Mucosa of descending colon (tissue), 3 donors: ENCODE measurements at regions of chr3 and their contacts with region 1.

Region 1: GRCh38 chr3:9067352-9067975 is 104.2 kb upstream of the RAD18 start:
- DNase-seq: peak in 1 of 3 donors; percentile 70
- ATAC-seq: peak; percentile 75
- H3K4me3 ChIP-seq: no peak overlapping the region
- H3K4me1 ChIP-seq: no peaks in the 10 kb centered on the region
- CTCF ChIP-seq: peak; percentile 71

Region 2: GRCh38 chr3:8970971-8971589 is 96.4 kb before region 1 on chr3:
- intact Hi-C with region 1: loop called (anchors 1 to 5 kb)
- DNase-seq: peak in 2 of 3 donors; percentile 62 to 81
- ATAC-seq: peak; percentile 84
- H3K4me3 ChIP-seq: no peak overlapping the region
- H3K4me1 ChIP-seq: peaks cover 10% of the 10 kb centered on the region
- CTCF ChIP-seq: peak; percentile 91

Region 3: DNA sequence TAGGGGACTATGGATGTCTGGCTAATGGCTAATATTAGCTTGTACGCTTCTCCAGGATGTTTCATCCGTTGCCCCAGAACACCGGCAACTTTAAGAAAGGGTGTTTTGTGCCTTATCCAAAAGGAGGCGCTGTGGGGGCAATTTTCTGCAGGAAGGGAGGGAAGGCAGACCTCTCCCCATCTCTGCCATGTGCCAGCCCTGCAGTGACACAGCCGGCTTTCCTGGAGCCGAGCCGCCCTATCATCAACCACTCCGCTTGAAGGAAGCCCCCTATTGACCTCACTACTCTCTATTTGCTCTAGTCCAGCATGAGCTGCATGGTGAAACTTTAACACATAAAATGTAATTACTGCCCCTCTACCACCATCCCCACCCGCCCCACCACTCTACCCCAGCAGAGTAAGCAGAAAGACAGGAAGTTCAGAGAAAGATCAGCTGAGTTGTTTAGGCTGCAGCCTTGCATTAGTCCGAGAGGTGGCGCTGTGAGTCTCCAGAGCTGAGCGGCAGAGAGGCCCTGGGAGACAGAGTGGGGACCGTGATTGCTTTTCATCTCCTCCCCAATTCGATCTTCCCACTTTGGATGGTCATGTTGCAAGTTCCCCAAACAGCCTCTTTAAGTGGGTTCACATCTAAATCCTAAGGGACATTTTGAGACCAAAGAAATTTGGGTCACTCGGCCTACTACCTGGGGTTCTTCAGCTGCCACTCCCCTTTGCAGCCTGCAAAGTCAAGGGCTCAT is 79.7 kb before region 1 on chr3:
- intact Hi-C with region 1: loop called in 1 of 2 experiments (anchors 5 kb)
- DNase-seq: peak in 2 of 3 donors; percentile 72
- ATAC-seq: peak; percentile 77
- H3K4me3 ChIP-seq: no peak overlapping the region
- H3K4me1 ChIP-seq: no peaks in the 10 kb centered on the region
- CTCF ChIP-seq: peak; percentile 63